Heart left ventricle (tissue), 16 donors: ENCODE measurements at regions of chr6 and their contacts with region 1.

Region 1: GRCh38 chr6:118514689-118515088 is 33.4 kb upstream of the PLN start:
- DNase-seq: peak; percentile 57 to 83 (median 78)
- ATAC-seq: peak; percentile 99 to 100 (median 99)
- H3K4me3 ChIP-seq: peak overlapping the region in 3 of 12 donors; percentile 21 to 33 (median 26)
- H3K27ac ChIP-seq: peak overlapping the region; percentile 49 to 87 (median 74)
- H3K4me1 ChIP-seq: peaks cover 0 to 26% (median 1%) of the 10 kb centered on the region in 12 donors
- H3K27me3 ChIP-seq: no peaks in the 10 kb centered on the region
- CTCF ChIP-seq: no peak
- POLR2A ChIP-seq: no peak

Region 2: GRCh38 chr6:118528129-118528528 is 13.4 kb after region 1 on chr6:
- intact Hi-C with region 1: loop called in 1 of 10 experiments (anchors 2 kb)
- DNase-seq: no peak
- ATAC-seq: no peak
- H3K4me3 ChIP-seq: no peak overlapping the region
- H3K27ac ChIP-seq: peak overlapping the region in 10 of 12 donors; percentile 0 to 56 (median 18)
- H3K4me1 ChIP-seq: peaks cover 0 to 42% (median 15%) of the 10 kb centered on the region in 12 donors
- H3K27me3 ChIP-seq: no peaks in the 10 kb centered on the region
- CTCF ChIP-seq: no peak
- POLR2A ChIP-seq: no peak

Region 3: GRCh38 chr6:118551063-118552053 is 36.7 kb after region 1 on chr6:
- intact Hi-C with region 1: loop called in 8 of 10 experiments (anchors 2 to 5 kb)
- DNase-seq: no peak
- ATAC-seq: peak; percentile 41 to 64 (median 64)
- H3K4me3 ChIP-seq: peak overlapping the region; percentile 27 to 64 (median 54)
- H3K27ac ChIP-seq: peak overlapping the region; percentile 27 to 87 (median 78)
- H3K4me1 ChIP-seq: peaks cover 0 to 14% (median 0%) of the 10 kb centered on the region in 12 donors
- H3K27me3 ChIP-seq: no peaks in the 10 kb centered on the region
- CTCF ChIP-seq: peak; percentile 31 to 77 (median 58)
- POLR2A ChIP-seq: no peak